ENCODE measurements at regions of chr9 and their contacts with region 1.

Region 1: DNA sequence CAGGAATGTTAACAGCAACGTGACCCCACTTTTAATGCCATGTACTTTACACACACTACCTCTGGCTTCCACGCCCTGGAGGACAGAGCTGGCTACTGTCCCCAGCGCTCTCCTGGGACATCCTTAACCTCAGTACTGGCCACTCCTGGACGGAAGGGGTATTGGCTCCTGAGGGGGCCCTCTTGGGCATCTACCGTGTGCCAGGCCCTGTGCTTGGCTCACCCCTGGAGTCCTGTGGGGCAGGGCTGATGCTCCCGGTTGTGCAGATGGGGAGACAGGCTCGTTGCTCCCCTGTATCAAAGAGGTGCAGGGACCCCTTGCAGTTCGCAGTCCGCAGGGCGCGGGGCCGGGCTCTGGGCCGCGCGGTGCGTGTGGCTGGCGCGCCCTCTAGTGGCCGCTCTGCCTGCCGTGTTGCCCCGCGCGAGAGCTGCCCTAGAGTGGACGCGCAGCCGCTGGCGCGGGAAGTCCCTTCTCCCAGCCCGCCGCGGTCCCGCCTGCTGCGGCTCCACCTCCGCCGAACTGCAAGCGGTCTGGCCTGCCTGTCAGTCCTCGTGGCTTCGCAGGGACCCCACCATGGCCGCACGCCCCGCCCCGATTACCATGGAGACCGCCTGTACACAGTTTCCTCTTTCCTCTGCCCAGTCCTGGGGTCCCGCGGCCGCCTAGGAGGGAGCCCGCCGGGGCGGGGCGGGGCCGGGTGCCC is at the start of gene WDR38:
- DNase-seq: peak; percentile 75 to 83 (median 76)
- ATAC-seq: peak; percentile 89
- H3K4me3 ChIP-seq: peak within 1 kb of the TSS in 1 of 2 donors; percentile 9
- H3K27ac ChIP-seq: no peak within 1 kb of the TSS
- H3K4me1 ChIP-seq: peaks cover 14% of the 10 kb centered on the region
- H3K27me3 ChIP-seq: no peaks in the 10 kb centered on the region
- CTCF ChIP-seq: peak; percentile 96 to 99 (median 98)
- POLR2A ChIP-seq: no peak
- total RNA-seq, gene WDR38: 0.78 TPM in 1 of 2 donors, not detected in the other

Region 2: GRCh38 chr9:124771867-124772679 is 80.9 kb before region 1 on chr9:
- intact Hi-C with region 1: loop called (anchors 2 kb)
- DNase-seq: peak; percentile 66 to 81 (median 77)
- ATAC-seq: peak; percentile 43
- H3K4me3 ChIP-seq: peak overlapping the region in 1 of 2 donors; percentile 3
- H3K27ac ChIP-seq: peak overlapping the region; percentile 40 to 91 (median 86)
- H3K4me1 ChIP-seq: peaks cover 25% of the 10 kb centered on the region
- H3K27me3 ChIP-seq: no peaks in the 10 kb centered on the region
- CTCF ChIP-seq: peak; percentile 94 to 97 (median 96)
- POLR2A ChIP-seq: no peak

Region 3: GRCh38 chr9:125143375-125144090 is 290.6 kb after region 1 on chr9 and contains the start of gene SCAI:
- intact Hi-C with region 1: loop called (anchors 10 kb)
- DNase-seq: peak; percentile 99 to 100 (median 100)
- ATAC-seq: peak; percentile 100
- H3K4me3 ChIP-seq: peak within 1 kb of the TSS; percentile 83 to 95
- H3K27ac ChIP-seq: peak within 1 kb of the TSS in 3 of 4 donors; percentile 55 to 81 (median 74)
- H3K4me1 ChIP-seq: peaks cover 6% of the 10 kb centered on the region
- H3K27me3 ChIP-seq: no peaks in the 10 kb centered on the region
- CTCF ChIP-seq: peak; percentile 98 to 100 (median 99)
- POLR2A ChIP-seq: peak; percentile 33 to 67 (median 62)
- total RNA-seq, gene SCAI: 6.7 to 7.6 TPM